ENCODE measurements at regions of chr6 and their contacts with region 1.

Region 1: GRCh38 chr6:150813319-150813992 is 52.0 kb upstream of the MTHFD1L start:
- DNase-seq: peak in 2 of 42 donors; percentile 4 to 58

Region 2: DNA sequence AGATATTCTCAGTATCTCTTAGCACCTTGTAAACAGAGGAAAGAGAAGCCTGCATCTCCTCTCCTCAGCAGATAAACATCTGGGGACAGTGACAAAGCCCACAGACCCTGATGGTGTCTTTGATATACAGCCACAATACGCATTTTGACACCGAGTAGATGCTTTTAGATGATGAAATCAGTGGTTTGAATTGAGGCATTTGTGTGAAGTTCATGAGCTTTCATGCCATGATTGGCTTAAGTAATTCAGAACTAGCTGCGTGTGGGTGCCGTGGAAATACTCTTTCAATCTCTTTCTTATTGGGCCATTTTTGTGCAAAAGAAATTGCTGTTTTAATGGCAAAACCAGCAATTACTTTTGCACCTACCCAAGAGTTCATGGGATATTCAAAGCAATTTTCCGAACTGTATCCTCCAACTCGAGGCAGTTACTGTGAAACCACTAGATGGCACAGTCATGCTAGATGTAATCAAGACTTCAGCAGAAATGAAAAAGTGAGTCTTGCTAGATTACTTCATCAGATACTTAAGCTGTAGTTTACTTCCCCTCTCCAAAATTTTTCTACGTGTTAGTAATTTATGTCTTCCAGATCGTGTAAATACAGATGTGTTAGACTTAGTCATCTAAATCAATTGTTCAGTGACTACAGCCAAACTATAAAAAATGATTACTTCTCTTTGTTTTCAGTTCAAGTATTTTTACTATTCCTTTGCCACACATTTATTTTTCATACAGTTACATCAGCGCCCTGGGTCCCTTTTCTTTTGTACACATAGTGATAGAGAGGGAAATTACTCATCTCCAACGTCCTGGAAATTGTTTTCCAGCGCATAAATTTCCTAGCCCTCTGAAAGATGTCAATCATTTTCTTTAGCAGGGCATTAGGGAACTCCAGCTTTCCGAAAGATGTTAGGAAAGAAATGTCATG is 395.3 kb before region 1 on chr6:
- intact Hi-C with region 1: loop called (anchors 5 kb)
- DNase-seq: peak in 19 of 42 donors; percentile 19 to 76 (median 42)